ENCODE measurements at regions of chr2 and their contacts with region 1.

Region 1: GRCh38 chr2:231780909-231781797 is at the start of gene PDE6D:
- DNase-seq: peak; percentile 98
- H3K4me3 ChIP-seq: peak within 1 kb of the TSS; percentile 74 to 96
- H3K27ac ChIP-seq: peak within 1 kb of the TSS; percentile 72 to 91
- H3K4me1 ChIP-seq: no peaks in the 10 kb centered on the region
- H3K27me3 ChIP-seq: no peaks in the 10 kb centered on the region
- CTCF ChIP-seq: peak in 1 of 4 experiments; percentile 11
- POLR2A ChIP-seq: peak; percentile 98
- total RNA-seq, gene PDE6D: 17.3 to 31.8 TPM

Region 2: GRCh38 chr2:231961349-231962166 is 180.4 kb after region 1 on chr2 and contains the start of gene DIS3L2:
- intact Hi-C with region 1: loop called (anchors 10 kb)
- DNase-seq: peak; percentile 74
- H3K4me3 ChIP-seq: peak within 1 kb of the TSS; percentile 61 to 85
- H3K27ac ChIP-seq: peak within 1 kb of the TSS; percentile 69 to 72
- H3K4me1 ChIP-seq: peaks cover 3% of the 10 kb centered on the region
- H3K27me3 ChIP-seq: no peaks in the 10 kb centered on the region
- CTCF ChIP-seq: peak in 1 of 4 experiments; percentile 23
- POLR2A ChIP-seq: peak; percentile 33
- total RNA-seq, gene DIS3L2: 30.1 to 71.3 TPM

Measured in prostate gland (tissue), 2 donors.